T-cell (primary cell): ENCODE measurements at regions of chr6 and their contacts with region 1.

Region 1: DNA sequence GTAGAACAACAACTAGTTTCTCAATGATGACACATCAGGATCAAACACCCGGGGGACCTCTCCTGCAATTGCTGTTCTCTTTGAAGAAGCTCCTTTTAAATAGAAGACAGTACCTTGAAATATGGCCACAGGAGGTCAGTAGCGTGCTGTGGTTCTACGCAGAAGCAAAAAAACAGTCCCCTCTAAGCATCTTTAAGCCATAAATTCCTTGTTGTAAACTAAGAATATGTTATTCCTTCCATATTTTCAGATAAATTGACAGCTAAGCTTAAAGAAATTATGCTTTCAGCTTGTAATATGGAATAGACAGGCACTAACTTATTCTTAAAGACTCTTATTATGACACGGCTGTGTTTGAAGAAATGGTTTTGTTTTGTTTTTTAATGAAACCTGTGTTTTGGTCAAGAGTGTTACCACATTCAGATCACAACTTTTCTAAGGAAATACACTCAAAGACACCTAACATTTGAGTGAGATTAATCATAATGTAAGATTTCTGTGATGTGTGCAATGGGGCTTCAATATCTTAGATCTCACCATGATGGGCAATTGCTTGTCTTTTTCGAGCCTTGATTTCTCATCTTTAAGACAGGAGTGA is 49.7 kb upstream of the IL20RA start:
- DNase-seq: peak in 33 of 35 experiments; percentile 15 to 79 (median 42)
- ATAC-seq: peak; percentile 57 to 67 (median 64)
- H3K4me3 ChIP-seq: no peak overlapping the region
- H3K4me3 Mint-ChIP-seq: no peak overlapping the region
- H3K27ac ChIP-seq: no peak overlapping the region
- H3K27ac Mint-ChIP-seq: no peak overlapping the region
- H3K4me1 ChIP-seq: peaks cover 0 to 8% of the 10 kb centered on the region in 2 experiments
- H3K4me1 Mint-ChIP-seq: peaks cover 0 to 26% (median 17%) of the 10 kb centered on the region in 3 donors
- H3K27me3 ChIP-seq: peaks cover 0 to 3% of the 10 kb centered on the region in 2 experiments
- H3K27me3 Mint-ChIP-seq: peaks cover 0 to 10% of the 10 kb centered on the region in 2 donors

Region 2: DNA sequence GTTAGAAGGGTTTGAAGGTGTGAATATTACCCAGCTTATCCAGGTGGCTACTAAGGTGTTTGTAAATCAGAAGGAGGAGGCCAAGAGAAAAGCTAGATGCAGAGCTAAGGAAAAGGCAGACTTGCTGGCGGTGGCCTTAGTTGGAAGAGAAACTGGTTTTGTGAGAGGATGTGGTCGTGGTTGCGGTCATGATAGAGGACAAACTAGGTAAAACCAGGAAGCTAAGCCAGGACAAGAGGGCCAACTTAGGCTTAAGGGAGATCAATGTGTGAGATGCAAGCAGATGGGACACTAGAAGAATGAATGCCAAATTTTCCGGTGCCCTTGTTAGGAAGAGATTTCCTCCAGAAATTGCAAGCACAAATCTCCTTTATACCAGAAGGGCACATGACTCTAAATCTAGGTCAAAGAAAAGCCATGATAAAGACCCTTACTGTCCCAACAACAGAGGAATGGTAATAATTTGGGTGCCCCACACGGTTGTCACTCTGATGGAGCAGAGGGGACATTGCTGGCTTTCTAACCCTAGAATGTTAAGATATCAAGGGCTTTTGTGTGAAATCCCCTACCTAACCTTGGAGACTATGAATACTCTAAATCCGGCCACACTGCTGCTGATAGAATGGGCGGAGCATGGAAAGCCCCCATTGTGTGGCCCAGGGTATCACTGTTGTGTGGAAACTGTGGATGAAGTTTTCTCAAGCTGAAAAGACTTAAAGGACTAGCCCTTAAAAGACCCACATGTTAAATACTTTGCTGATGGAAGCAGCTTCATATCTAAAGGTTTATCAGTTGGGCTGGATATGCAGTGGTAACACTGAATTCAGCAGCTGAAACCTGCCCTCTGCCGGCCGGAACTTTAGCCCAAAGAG is 71.1 kb after region 1 on chr6:
- CTCF ChIA-PET with region 1: interaction called, 4 to 22 read pairs
- POLR2A ChIA-PET with region 1: no interaction called
- DNase-seq: peak in 25 of 35 experiments; percentile 3 to 51 (median 20)
- ATAC-seq: peak in 2 of 4 experiments; percentile 35 to 71
- H3K4me3 ChIP-seq: peak overlapping the region in 1 of 2 donors; percentile 3
- H3K4me3 Mint-ChIP-seq: peak overlapping the region in 1 of 3 donors; percentile 37
- H3K27ac ChIP-seq: peak overlapping the region; percentile 45
- H3K27ac Mint-ChIP-seq: peak overlapping the region in 1 of 2 donors; percentile 50
- H3K4me1 ChIP-seq: peaks cover 0 to 20% of the 10 kb centered on the region in 2 experiments
- H3K4me1 Mint-ChIP-seq: peaks cover 21 to 28% (median 23%) of the 10 kb centered on the region in 3 donors
- H3K27me3 ChIP-seq: no peaks in the 10 kb centered on the region
- H3K27me3 Mint-ChIP-seq: peaks cover 4 to 9% of the 10 kb centered on the region in 2 donors

Region 3: GRCh38 chr6:137313928-137314855 is 219.7 kb after region 1 on chr6:
- CTCF ChIA-PET with region 1: interaction called, 13 to 64 read pairs
- POLR2A ChIA-PET with region 1: no interaction called
- DNase-seq: peak; percentile 22 to 83 (median 59)
- ATAC-seq: peak; percentile 73 to 86 (median 80)
- H3K4me3 ChIP-seq: no peak overlapping the region
- H3K4me3 Mint-ChIP-seq: no peak overlapping the region
- H3K27ac ChIP-seq: no peak overlapping the region
- H3K27ac Mint-ChIP-seq: no peak overlapping the region
- H3K4me1 ChIP-seq: no peaks in the 10 kb centered on the region
- H3K4me1 Mint-ChIP-seq: peaks cover 2 to 8% (median 7%) of the 10 kb centered on the region in 3 donors
- H3K27me3 ChIP-seq: no peaks in the 10 kb centered on the region
- H3K27me3 Mint-ChIP-seq: peaks cover 0 to 10% of the 10 kb centered on the region in 2 donors

Region 4: DNA sequence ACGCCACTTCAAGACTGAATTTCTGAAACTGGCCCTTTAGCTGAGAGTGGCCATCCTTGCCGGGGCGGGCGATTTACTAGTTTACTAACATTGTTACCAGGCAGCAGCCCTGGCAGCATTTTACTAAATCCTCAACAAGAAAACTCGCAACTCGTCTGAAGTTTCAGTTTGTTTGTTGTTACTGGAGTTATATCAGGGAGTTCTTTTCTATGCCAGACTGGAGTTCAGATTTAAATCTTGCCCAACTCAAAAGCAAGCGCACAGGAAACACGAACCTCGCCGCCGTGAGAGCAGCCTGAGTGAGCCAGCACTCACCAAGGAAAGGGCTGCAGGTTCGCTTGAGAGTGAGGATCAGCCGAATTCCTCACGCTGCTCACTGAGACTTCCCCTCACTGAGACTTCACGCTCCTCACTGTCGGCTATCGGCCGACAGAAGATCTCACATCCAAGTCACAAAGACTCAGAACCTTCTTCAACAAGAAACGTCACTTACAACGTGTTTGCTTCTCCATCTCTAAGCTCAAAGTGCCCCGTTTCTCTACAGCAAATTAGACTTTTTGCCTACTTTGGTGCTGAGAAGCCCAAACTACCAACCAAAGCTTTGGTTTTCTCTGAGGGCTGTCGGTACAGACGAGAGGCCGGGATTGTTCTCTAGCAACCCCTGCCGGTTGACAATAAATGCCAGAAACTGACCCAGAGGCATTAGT is 320.8 kb after region 1 on chr6:
- CTCF ChIA-PET with region 1: interaction called, 3 to 12 read pairs
- POLR2A ChIA-PET with region 1: no interaction called
- DNase-seq: peak; percentile 22 to 83 (median 54)
- ATAC-seq: peak; percentile 91 to 95 (median 94)
- H3K4me3 ChIP-seq: peak overlapping the region; percentile 54 to 64
- H3K4me3 Mint-ChIP-seq: peak overlapping the region; percentile 70 to 81 (median 81)
- H3K27ac ChIP-seq: peak overlapping the region; percentile 77
- H3K27ac Mint-ChIP-seq: peak overlapping the region; percentile 90 to 91
- H3K4me1 ChIP-seq: peaks cover 3 to 16% of the 10 kb centered on the region in 2 experiments
- H3K4me1 Mint-ChIP-seq: peaks cover 12 to 14% (median 13%) of the 10 kb centered on the region in 3 donors
- H3K27me3 ChIP-seq: peaks cover 0 to 3% of the 10 kb centered on the region in 2 experiments
- H3K27me3 Mint-ChIP-seq: no peaks in the 10 kb centered on the region